ENCODE measurements at regions of chr2 and their contacts with region 1.

Region 1: DNA sequence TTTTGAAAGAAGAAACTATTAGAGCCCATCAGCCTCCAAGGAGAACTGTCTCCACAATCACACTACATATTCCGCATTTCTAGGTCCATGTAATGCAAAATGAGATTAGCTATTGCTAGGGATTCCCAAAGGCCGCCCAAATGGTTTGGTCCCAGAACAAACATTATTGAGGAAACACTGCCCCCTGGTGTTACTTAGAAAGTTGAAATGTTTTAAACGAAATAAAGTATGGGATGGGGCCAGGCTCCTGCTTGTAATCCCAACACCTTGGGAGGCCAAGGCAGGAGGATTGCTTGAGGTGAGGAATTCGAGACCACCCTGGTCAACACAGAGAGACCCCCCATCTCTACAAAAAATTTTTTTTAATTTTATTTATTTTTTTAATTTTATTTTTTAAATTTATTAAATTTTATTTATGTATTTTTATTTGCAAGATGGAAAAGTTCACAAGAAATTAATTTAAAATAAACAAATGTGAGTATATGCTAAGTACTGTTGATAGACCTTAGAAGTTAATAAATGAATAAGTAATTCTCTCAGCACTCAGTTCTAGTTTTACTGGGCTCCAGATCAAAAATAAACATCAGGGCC is 5.5 kb downstream of the NHEJ1 start:
- DNase-seq: peak; percentile 54
- H3K4me3 ChIP-seq: no peak overlapping the region
- H3K27ac ChIP-seq: no peak overlapping the region
- H3K4me1 ChIP-seq: peaks cover 9% of the 10 kb centered on the region
- H3K27me3 ChIP-seq: no peaks in the 10 kb centered on the region
- CTCF ChIP-seq: peak; percentile 23 to 61

Region 2: GRCh38 chr2:218995972-218996711 is 159.0 kb before region 1 on chr2:
- CTCF ChIA-PET with region 1: no interaction called
- dilution Hi-C with region 1: no loop called
- in situ Hi-C with region 1: no loop called
- intact Hi-C with region 1: loop called (anchors 1 kb)
- DNase-seq: peak; percentile 70
- H3K4me3 ChIP-seq: peak overlapping the region; percentile 26 to 54 (median 49)
- H3K27ac ChIP-seq: no peak overlapping the region
- H3K4me1 ChIP-seq: peaks cover 17% of the 10 kb centered on the region
- H3K27me3 ChIP-seq: peaks cover 6% of the 10 kb centered on the region
- CTCF ChIP-seq: peak; percentile 64 to 90

Region 3: DNA sequence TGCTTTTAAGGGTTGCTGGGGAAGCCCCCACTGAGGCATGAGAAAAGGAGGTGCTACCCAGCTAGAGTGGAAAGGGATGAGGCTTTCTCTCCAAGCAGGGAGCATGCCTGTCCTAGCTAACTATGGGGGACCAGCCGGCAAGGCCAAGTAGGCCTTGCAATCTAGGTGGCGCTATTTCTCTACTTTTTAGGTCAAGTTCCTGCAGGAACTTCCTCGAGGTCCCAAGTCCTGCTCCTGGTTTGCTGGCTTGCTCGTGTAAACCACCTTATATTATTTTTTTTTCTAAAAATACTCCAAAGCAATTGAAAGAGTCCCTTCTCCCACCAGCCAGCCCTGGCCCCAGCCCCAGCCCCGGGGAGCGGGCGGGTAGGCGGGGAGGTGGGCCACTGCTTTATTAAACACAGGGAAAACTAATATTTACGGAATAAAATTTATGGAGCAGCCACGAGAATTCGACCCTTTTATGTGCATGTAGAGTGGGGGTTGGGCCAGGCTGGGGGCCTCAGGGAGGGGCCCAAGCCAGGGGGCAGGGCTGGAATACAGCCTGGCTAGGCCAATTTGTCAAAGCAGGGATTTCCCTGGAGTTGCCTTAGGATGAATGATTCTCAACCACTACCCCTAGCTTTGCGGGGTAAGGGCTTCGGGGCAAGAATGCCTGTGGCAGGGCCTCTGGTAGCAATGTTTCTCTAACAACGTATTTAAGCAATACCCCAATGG is 81.6 kb before region 1 on chr2:
- CTCF ChIA-PET with region 1: no interaction called
- dilution Hi-C with region 1: no loop called
- in situ Hi-C with region 1: no loop called
- intact Hi-C with region 1: loop called (anchors 1 kb)
- DNase-seq: peak; percentile 41
- H3K4me3 ChIP-seq: no peak overlapping the region
- H3K27ac ChIP-seq: no peak overlapping the region
- H3K4me1 ChIP-seq: peaks cover 10% of the 10 kb centered on the region
- H3K27me3 ChIP-seq: no peaks in the 10 kb centered on the region
- CTCF ChIP-seq: peak; percentile 57 to 74